ENCODE measurements at regions of chr10 and their contacts with region 1.

Region 1: GRCh38 chr10:110671788-110672579 is 27.8 kb downstream of the RBM20 start:
- DNase-seq: no peak
- H3K4me3 ChIP-seq: peak overlapping the region; percentile 69
- CTCF ChIP-seq: peak; percentile 100

Region 2: GRCh38 chr10:110610308-110610774 is 61.6 kb before region 1 on chr10:
- CTCF ChIA-PET with region 1: interaction called, 19 read pairs
- POLR2A ChIA-PET with region 1: no interaction called
- DNase-seq: no peak
- H3K4me3 ChIP-seq: no peak overlapping the region
- CTCF ChIP-seq: peak; percentile 72

Region 3: GRCh38 chr10:110617425-110618229 is 54.4 kb before region 1 on chr10:
- CTCF ChIA-PET with region 1: interaction called, 11 read pairs
- POLR2A ChIA-PET with region 1: no interaction called
- DNase-seq: no peak
- H3K4me3 ChIP-seq: no peak overlapping the region
- CTCF ChIP-seq: no peak

Region 4: GRCh38 chr10:110648692-110649346 is 23.2 kb before region 1 on chr10:
- CTCF ChIA-PET with region 1: interaction called, 51 read pairs
- POLR2A ChIA-PET with region 1: no interaction called
- DNase-seq: no peak
- H3K4me3 ChIP-seq: no peak overlapping the region
- CTCF ChIP-seq: no peak

Region 5: DNA sequence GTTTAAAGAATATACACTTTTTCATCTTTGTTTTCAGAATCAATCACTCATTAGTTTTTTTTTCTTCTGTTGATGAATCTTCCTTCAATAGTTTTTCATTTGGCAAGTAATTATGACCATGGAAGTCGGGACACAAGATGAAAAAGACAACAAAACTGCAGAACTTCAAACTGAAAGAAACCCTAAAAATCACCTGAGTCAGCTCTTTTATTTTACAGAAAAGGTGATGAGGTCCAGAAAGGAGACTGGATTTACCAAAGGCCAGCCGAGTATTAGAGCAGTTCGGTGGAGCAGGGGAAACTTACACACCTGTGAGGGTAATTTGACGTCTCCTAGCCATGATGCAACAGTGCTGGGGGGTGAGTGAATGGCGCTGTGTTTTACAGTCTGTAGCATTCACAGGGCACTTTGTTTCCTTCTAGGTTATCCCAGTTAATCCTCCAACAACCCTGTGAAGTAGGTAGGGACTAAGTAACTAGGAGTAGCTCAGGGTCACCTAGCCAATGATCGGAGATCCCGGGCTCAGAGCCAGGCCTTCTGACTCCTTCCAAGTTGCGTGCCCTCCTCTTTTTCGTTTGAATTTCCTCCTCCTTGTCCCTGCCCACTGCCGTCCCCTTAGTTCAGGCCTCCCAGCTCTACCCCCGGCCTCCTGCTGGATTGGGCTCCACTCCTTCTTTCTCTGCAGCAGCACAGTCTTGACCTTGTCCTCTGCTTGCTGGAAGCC is 13.9 kb before region 1 on chr10:
- CTCF ChIA-PET with region 1: interaction called, 51 read pairs
- POLR2A ChIA-PET with region 1: no interaction called
- DNase-seq: no peak
- H3K4me3 ChIP-seq: no peak overlapping the region
- CTCF ChIP-seq: no peak

Region 6: DNA sequence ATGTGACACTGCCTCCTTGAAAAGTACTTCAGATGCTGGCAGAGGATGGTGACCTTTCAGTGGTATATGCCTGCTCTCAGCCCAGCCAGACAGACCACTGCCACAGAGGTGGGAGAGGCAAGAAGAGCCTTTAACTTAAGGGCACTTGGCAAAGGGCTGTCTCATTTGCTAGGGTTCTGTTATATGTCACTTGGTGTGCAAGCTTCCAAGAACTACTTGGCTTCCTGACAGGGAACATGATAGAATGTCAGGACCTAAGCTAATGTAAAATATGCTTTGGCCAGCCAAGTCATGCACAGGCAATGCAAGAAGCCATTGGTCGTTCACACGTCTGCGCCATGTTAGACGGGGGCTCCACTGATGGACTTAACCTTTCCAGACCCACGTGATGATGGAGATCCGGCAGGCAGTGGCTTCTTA is 26.8 kb after region 1 on chr10:
- CTCF ChIA-PET with region 1: interaction called, 11 read pairs
- POLR2A ChIA-PET with region 1: no interaction called
- DNase-seq: no peak
- H3K4me3 ChIP-seq: no peak overlapping the region
- CTCF ChIP-seq: no peak

Region 7: DNA sequence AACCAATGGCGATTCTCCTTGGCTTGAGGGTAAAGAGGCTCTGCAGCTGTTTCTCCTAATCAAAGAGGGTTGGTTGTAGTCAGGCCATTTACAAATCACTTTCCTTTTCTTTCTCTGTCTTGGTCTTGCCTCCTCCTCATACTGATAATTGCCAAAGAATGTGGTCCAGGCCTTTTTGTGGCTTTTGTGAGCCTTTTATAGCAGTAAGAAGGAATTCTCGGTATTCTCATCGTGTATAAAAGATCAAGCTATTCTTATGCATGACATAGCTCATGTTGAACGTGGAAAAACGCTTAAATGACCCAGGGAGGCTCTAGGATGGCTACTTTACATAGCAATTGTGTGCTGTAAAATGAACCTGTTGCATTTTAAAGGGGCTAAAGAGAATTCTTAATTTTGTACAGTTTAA is 34.7 kb after region 1 on chr10:
- CTCF ChIA-PET with region 1: interaction called, 24 read pairs
- POLR2A ChIA-PET with region 1: no interaction called
- DNase-seq: peak; percentile 89
- H3K4me3 ChIP-seq: 0 out of 2 replicates have a peak overlapping the region, but pooled peaks have one; percentile 10
- CTCF ChIP-seq: no peak

Region 8: GRCh38 chr10:110735620-110736027 is 63.6 kb after region 1 on chr10:
- CTCF ChIA-PET with region 1: no interaction called
- POLR2A ChIA-PET with region 1: no interaction called
- DNase-seq: no peak
- H3K4me3 ChIP-seq: no peak overlapping the region
- CTCF ChIP-seq: no peak